BJ (cell line): ENCODE measurements at regions of chr22 and their contacts with region 1.

Region 1: GRCh38 chr22:43346521-43346929 is 3.4 kb upstream of the SCUBE1 start:
- DNase-seq: no peak
- H3K4me3 ChIP-seq: no peak overlapping the region
- H3K27me3 ChIP-seq: peaks cover 26% of the 10 kb centered on the region
- CTCF ChIP-seq: peak; percentile 75

Region 2: GRCh38 chr22:42805016-42805997 is 541.2 kb before region 1 on chr22:
- CTCF ChIA-PET with region 1: no interaction called
- POLR2A ChIA-PET with region 1: no interaction called
- DNase-seq: no peak
- H3K4me3 ChIP-seq: no peak overlapping the region
- H3K27me3 ChIP-seq: no peaks in the 10 kb centered on the region
- CTCF ChIP-seq: no peak

Region 3: GRCh38 chr22:43060183-43060582 is 286.3 kb before region 1 on chr22:
- CTCF ChIA-PET with region 1: no interaction called
- POLR2A ChIA-PET with region 1: no interaction called
- DNase-seq: no peak
- H3K4me3 ChIP-seq: no peak overlapping the region
- H3K27me3 ChIP-seq: no peaks in the 10 kb centered on the region
- CTCF ChIP-seq: peak; percentile 61

Region 4: DNA sequence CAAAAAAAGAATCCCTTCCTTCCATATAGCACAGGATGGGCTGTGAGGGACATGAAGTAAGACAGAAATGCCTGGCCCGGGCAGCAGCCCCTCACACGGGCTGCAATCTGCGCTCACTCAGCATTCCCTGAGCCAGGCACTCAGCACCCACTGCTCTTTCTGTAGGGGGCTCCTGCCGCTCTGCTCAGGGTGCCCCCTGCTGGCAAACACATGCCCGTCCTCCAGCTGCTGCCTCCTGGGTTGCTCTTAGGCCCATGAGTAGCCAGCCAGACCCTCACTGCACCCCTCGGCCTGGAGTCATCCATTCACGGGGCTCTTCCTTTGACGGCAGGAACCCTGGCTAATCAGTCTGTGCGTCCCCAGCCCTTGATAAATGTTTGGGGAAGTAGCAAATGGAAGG is 210.3 kb before region 1 on chr22:
- CTCF ChIA-PET with region 1: no interaction called
- POLR2A ChIA-PET with region 1: no interaction called
- DNase-seq: no peak
- H3K4me3 ChIP-seq: no peak overlapping the region
- H3K27me3 ChIP-seq: no peaks in the 10 kb centered on the region
- CTCF ChIP-seq: peak; percentile 73

Region 5: DNA sequence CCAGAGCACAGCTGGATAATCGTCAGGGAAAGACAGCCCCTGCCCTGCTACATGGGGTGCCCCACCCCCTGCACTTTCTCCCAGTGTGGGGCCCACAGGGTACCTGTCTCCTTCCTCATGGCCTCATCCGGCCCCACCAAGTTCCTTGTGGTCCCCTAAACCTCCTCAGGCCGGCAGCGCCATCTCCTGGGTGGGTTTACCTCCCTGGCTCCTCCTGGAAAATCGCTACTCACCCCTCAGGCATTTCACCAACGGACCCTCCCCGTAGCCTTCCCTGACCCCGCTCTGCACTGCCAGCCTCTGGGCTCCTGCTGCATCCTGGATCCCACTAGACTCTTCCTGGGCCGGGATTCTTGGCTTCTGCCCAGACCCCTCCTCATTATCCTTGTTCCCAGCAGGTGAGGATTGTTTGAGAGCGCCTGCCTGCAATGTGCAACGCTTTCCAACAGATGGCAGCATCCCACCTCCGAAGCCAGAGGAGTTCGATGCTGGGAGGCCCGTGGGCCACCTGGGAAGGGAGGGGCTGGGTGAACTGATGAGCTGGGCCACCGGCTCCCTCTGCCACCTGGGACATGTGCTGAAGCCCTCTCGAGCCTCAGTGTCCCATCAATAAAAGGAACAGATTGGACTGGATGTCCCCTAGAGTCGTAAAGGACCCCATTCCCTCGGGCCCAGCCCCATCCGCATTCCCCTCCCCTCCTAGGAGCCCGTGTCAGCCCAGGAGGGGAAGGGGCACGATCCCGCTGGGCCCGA is 115.4 kb before region 1 on chr22:
- CTCF ChIA-PET with region 1: interaction called, 12 read pairs
- POLR2A ChIA-PET with region 1: no interaction called
- DNase-seq: no peak
- H3K4me3 ChIP-seq: no peak overlapping the region
- H3K27me3 ChIP-seq: peaks cover 6% of the 10 kb centered on the region
- CTCF ChIP-seq: peak; percentile 85

Region 6: GRCh38 chr22:43273902-43274484 is 72.5 kb before region 1 on chr22:
- CTCF ChIA-PET with region 1: interaction called, 264 read pairs
- POLR2A ChIA-PET with region 1: no interaction called
- DNase-seq: no peak
- H3K4me3 ChIP-seq: no peak overlapping the region
- H3K27me3 ChIP-seq: no peaks in the 10 kb centered on the region; the same call in 1 of the 2 replicates
- CTCF ChIP-seq: peak; percentile 72

Region 7: GRCh38 chr22:43293655-43294392 is 52.7 kb before region 1 on chr22:
- CTCF ChIA-PET with region 1: interaction called, 14 read pairs
- POLR2A ChIA-PET with region 1: no interaction called
- DNase-seq: no peak
- H3K4me3 ChIP-seq: no peak overlapping the region
- H3K27me3 ChIP-seq: peaks cover 16% of the 10 kb centered on the region
- CTCF ChIP-seq: no peak

Region 8: DNA sequence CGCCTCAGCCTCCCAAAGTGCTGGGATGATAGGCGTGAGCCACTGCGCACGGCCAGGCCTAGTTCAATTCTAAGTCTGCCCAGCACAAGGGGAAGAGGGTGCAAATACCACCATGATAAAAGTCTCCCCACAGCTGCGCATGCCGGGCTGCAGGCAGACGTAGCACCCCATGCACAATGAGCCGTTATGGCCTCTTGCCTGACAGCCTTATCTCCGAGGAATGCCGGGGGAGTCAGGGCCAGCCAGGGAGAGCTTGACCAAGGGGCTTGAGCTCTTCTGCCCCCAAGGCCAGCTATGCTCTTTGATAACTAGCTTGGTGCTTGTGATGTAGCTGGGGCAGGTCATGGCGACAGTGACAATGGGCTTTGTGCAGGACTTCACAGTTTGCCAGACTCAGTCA is 10.4 kb after region 1 on chr22:
- CTCF ChIA-PET with region 1: interaction called, 28 read pairs
- POLR2A ChIA-PET with region 1: no interaction called
- DNase-seq: no peak
- H3K4me3 ChIP-seq: no peak overlapping the region
- H3K27me3 ChIP-seq: no peaks in the 10 kb centered on the region
- CTCF ChIP-seq: no peak